ENCODE measurements at regions of chr17 and their contacts with region 1.

Region 1: DNA sequence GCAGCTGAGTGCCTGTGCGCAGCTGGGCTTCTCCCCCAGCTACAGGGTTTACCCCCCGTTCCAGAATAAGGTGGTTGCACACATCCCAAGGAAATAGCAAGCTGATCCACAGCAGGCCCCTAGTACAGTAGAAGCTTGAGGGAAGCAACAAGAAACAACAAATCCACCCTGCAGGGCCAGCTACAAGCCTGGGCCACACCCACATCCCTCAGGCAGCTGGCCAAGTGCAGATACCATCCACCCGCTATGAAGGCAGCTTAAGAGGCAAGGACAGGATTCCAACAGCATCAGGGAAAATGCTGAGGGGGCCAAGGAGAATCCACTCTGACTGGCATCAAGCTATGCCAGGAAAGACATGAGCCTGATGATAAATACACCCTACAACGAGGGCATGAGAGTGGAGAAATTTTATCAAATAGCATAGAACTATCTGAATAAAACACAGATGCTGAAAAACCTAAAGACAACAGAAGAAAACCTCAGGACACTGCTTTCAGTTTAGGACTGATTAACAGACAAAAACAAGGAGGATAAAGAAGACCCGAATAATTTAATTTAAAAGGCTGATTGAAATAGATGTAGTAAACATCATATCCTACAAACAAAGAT is 67.0 kb upstream of the RCVRN start:
- DNase-seq: no peak
- H3K4me3 ChIP-seq: no peak overlapping the region
- H3K4me3 Mint-ChIP-seq: no peak overlapping the region
- H3K27ac ChIP-seq: no peak overlapping the region
- H3K27ac Mint-ChIP-seq: peak overlapping the region in 1 of 7 donors; percentile 9
- H3K4me1 ChIP-seq: no peaks in the 10 kb centered on the region
- H3K4me1 Mint-ChIP-seq: peaks cover 0 to 5% (median 0%) of the 10 kb centered on the region in 4 donors
- H3K27me3 ChIP-seq: no peaks in the 10 kb centered on the region
- H3K27me3 Mint-ChIP-seq: peaks cover 0 to 2% of the 10 kb centered on the region in 2 donors

Region 2: DNA sequence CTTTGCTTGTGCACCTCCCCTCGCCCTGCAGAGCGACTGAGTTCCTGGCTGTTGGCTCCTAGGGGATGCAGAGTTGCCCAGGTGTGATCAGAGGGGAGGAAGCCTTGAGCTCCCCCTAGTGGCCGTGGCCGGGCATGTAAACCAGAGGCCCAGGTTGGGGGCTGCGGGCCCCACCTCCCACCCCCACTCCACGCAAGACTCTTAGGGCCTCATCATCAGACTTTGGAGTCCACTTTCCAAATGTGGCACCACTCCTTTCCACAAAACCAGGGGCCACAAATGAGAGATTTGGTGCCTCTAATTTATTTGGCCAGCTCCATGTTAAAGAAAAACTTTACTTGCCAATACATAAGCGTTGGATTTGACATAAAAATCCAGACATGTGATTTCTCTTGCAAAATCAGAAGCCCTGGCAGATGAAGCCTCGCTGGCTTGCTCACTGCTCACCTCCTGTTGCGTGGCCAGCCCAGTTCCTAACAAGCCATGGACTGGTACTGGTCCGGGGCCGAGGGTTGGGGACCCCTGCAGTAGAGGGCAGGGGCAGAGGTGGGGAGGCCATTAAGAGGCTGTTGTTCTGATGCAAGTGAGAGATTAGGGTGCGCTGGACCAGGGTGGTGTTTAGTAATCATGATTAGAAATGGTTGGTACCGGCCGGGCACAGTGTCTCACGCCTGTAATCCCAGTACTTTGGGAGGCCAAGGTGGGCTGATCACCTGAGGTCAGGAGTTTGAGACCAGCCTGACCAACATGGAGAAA is 255.0 kb after region 1 on chr17:
- CTCF ChIA-PET with region 1: interaction called, 10 read pairs
- POLR2A ChIA-PET with region 1: no interaction called
- intact Hi-C with region 1: no loop called
- DNase-seq: peak in 4 of 5 donors; percentile 4 to 19 (median 13)
- H3K4me3 ChIP-seq: no peak overlapping the region
- H3K4me3 Mint-ChIP-seq: no peak overlapping the region
- H3K27ac ChIP-seq: no peak overlapping the region
- H3K27ac Mint-ChIP-seq: no peak overlapping the region
- H3K4me1 ChIP-seq: no peaks in the 10 kb centered on the region
- H3K4me1 Mint-ChIP-seq: no peaks in the 10 kb centered on the region
- H3K27me3 ChIP-seq: no peaks in the 10 kb centered on the region
- H3K27me3 Mint-ChIP-seq: no peaks in the 10 kb centered on the region